ENCODE measurements at regions of chr19 and their contacts with region 1.

Region 1: DNA sequence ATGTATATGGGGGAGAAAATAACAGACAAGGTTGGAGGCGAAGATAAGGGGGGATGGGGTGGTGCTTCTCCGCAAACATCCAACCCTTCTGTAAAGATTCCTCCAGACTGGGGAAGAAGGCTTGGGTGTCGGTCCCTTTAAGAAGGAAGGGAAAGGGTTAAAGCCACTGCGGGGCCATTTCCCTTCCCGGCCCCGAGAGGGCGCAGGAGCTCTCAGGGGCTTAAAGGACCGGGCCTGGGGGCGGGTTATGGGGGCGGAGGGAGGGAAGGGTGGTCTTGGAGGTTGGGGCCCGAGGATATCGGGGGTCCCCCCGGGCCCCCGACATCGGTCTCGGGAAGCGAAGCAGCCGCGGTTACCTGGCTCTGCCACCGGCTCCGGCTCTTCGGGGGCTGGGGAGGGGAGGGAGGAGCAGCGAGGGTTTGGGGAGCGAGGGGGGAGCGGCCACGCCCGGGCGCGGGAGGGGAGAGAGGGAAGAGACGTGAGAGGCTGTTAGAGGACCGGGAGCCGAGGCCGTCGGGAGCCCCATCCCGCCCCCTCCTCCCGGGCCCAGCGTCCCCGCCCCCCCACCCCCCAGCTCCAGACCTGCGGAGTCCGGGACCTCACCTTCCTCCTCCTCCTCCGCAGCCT is 2.8 kb downstream of the TNNT1 start:
- DNase-seq: peak; percentile 85 to 91
- ATAC-seq: peak; percentile 73 to 83
- H3K4me3 ChIP-seq: peak overlapping the region; percentile 64
- H3K27ac ChIP-seq: peak overlapping the region; percentile 82 to 92
- H3K4me1 ChIP-seq: peaks cover 37% of the 10 kb centered on the region
- CTCF ChIP-seq: peak; percentile 94
- EP300 ChIP-seq: no peak
- POLR2A ChIP-seq: no peak
- RAD21 ChIP-seq: peak; percentile 56 to 59

Region 2: DNA sequence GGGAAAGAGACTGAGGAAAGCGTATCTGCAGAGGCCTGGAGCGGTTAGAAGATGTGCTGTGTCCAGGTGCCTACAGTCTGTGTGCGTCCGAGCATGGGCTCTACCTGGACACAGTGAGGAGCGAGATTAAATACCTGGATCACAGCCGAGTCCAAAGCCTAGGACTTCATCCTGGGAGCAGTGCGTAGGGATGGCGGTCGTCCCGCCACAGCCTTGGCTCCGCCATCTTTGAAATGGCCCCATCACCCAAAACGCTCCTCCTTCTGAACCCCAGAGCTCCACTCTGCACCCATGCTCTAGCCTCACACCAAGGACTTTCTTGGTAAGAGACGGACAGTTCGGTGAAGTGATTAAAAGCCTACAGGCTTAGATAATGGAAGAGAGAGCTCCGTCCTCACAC is 128.0 kb before region 1 on chr19:
- CTCF ChIA-PET with region 1: no interaction called
- POLR2A ChIA-PET with region 1: no interaction called
- DNase-seq: no peak
- ATAC-seq: peak; percentile 21 to 27; a peak in 3 of 6 replicates
- H3K4me3 ChIP-seq: no peak overlapping the region
- H3K27ac ChIP-seq: no peak overlapping the region
- H3K4me1 ChIP-seq: no peaks in the 10 kb centered on the region
- CTCF ChIP-seq: no peak
- EP300 ChIP-seq: no peak
- POLR2A ChIP-seq: no peak
- RAD21 ChIP-seq: no peak

Region 3: GRCh38 chr19:55132453-55133129 is 13.6 kb before region 1 on chr19:
- CTCF ChIA-PET with region 1: interaction called, 23 read pairs
- POLR2A ChIA-PET with region 1: no interaction called
- DNase-seq: no peak
- ATAC-seq: no peak
- H3K4me3 ChIP-seq: no peak overlapping the region
- H3K27ac ChIP-seq: no peak overlapping the region
- H3K4me1 ChIP-seq: no peaks in the 10 kb centered on the region
- CTCF ChIP-seq: no peak
- EP300 ChIP-seq: no peak
- POLR2A ChIP-seq: no peak
- RAD21 ChIP-seq: no peak

Region 4: GRCh38 chr19:55258828-55259539 is 112.8 kb after region 1 on chr19 and contains the start of gene PPP6R1:
- CTCF ChIA-PET with region 1: interaction called, 13 read pairs
- POLR2A ChIA-PET with region 1: no interaction called
- DNase-seq: peak; percentile 99 to 100
- ATAC-seq: peak; percentile 83 to 93
- H3K4me3 ChIP-seq: peak within 1 kb of the TSS; percentile 81
- H3K27ac ChIP-seq: peak within 1 kb of the TSS; percentile 87 to 95
- H3K4me1 ChIP-seq: peaks cover 36% of the 10 kb centered on the region
- CTCF ChIP-seq: no peak
- EP300 ChIP-seq: peak in 1 of 2 experiments; percentile 31; a peak in 1 of 5 replicates
- POLR2A ChIP-seq: peak; percentile 87
- RAD21 ChIP-seq: peak; percentile 44 to 61; a peak in 4 of 5 replicates
- polyA plus RNA-seq, gene PPP6R1: 42.9 and 44.6 TPM in 2 replicates

Region 5: DNA sequence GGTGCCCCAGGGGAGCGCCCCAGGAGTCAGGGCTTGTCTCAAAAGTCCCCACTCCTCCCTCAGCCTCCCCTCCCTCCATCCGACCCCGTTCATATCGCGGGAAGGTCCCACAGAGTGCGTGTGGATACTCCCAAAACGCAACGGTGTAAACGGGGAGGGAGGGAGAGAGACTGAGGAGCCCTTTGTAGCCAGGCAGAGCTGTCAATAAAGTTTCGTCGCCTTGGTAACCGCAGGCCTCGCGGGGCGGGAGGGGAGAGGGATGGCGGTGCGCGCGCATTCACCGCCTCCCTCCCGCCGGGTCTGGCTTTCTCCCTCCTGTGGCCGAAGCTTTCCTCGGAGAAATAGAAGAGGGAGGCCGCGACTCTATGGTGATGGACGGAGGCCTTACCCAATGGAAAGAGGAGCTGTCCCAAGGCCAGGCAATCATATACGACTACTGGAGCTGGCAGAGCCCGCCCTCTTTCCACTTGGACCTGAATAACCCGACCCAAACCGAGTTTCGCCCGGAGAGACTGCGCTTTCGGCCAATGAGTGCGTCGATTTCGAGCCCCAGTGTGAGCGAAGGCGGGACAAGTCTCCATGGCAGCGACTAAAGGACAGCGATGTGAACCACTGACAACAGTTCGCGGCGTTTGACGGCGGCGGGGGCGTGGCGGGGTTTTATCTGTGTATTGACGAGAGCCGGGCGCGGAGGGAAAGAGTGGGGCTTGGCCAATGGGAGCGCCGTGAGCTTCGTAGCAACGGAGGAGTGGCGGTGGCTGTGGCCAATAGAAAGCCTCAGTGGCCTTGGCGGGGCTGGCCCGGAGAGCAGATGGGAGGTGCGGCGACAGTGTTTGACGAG is 193.1 kb after region 1 on chr19 and contains the start of gene KMT5C:
- CTCF ChIA-PET with region 1: interaction called, 11 read pairs
- POLR2A ChIA-PET with region 1: interaction called, 5 read pairs
- DNase-seq: peak; percentile 100
- ATAC-seq: peak; percentile 81 to 92
- H3K4me3 ChIP-seq: peak within 1 kb of the TSS; percentile 63
- H3K27ac ChIP-seq: peak within 1 kb of the TSS; percentile 90 to 93
- H3K4me1 ChIP-seq: peaks cover 17% of the 10 kb centered on the region
- CTCF ChIP-seq: no peak
- EP300 ChIP-seq: no peak
- POLR2A ChIP-seq: no peak
- RAD21 ChIP-seq: no peak; a peak in 1 of 5 replicates
- polyA plus RNA-seq, gene KMT5C: 6.6 and 9.5 TPM in 2 replicates

Region 6: DNA sequence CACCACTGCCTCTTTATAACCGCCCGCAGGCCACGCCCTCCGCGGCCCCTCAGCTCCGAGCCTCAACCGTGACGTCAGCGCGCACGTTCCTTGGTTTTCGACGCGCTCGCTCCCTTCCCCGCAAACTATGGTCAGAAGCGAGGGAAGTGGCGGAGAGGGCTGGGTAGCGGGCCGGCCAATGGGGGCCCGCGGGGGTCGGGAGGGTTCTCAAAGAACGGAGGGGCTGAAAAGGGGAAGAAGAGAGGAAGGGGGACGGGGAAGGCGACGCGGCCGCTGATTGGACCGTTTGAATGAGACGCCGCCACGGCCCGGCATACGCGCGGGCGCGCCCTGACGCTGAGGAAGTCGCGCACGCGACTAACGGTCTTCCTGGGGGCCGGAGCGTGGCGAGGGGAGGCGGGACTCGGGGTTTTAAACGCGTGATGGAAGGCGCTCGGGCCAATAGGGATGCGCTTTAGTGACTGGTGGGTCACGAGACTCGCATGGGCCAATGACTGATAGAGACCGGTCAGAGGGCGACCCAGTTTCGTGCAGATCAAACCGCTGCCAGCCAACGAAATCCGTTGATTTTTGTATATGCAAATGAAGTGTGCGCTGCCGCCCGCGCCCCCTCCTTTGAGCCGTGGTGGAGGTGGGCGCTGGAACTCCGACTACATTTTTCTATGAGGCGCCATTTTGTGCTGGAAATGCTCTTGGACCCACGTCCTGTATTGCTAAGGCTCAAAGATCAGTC is 261.8 kb after region 1 on chr19:
- CTCF ChIA-PET with region 1: interaction called, 15 read pairs
- POLR2A ChIA-PET with region 1: interaction called, 8 read pairs
- DNase-seq: peak; percentile 100
- ATAC-seq: peak; percentile 90 to 96
- H3K4me3 ChIP-seq: peak overlapping the region; percentile 98
- H3K27ac ChIP-seq: peak overlapping the region; percentile 95 to 97
- H3K4me1 ChIP-seq: peaks cover 36% of the 10 kb centered on the region
- CTCF ChIP-seq: no peak
- EP300 ChIP-seq: no peak
- POLR2A ChIP-seq: no peak
- RAD21 ChIP-seq: no peak

Region 7: GRCh38 chr19:55467236-55468053 is 321.3 kb after region 1 on chr19:
- CTCF ChIA-PET with region 1: interaction called, 27 read pairs
- POLR2A ChIA-PET with region 1: no interaction called
- DNase-seq: peak; percentile 48 to 73
- ATAC-seq: peak; percentile 75 to 93
- H3K4me3 ChIP-seq: no peak overlapping the region
- H3K27ac ChIP-seq: peak overlapping the region; percentile 6 to 35; a peak in 3 of 6 replicates
- H3K4me1 ChIP-seq: peaks cover 6% of the 10 kb centered on the region; the same call in 2 of the 3 replicates
- CTCF ChIP-seq: peak; percentile 99
- EP300 ChIP-seq: no peak
- POLR2A ChIP-seq: no peak
- RAD21 ChIP-seq: peak; percentile 57 to 73

Region 8: GRCh38 chr19:55624109-55625003 is 478.2 kb after region 1 on chr19 and contains the start of gene ZNF784:
- CTCF ChIA-PET with region 1: interaction called, 46 read pairs
- POLR2A ChIA-PET with region 1: no interaction called
- DNase-seq: peak; percentile 89 to 96
- ATAC-seq: peak; percentile 74 to 82
- H3K4me3 ChIP-seq: peak within 1 kb of the TSS; percentile 48
- H3K27ac ChIP-seq: peak within 1 kb of the TSS; percentile 89 to 93
- H3K4me1 ChIP-seq: 0 out of 3 replicates have a peak, but pooled peaks cover 7% of the 10 kb centered on the region
- CTCF ChIP-seq: no peak
- EP300 ChIP-seq: no peak
- POLR2A ChIP-seq: peak; percentile 80
- RAD21 ChIP-seq: no peak
- polyA plus RNA-seq, gene ZNF784: 3.5 and 4.1 TPM in 2 replicates